K562 (cell line): ENCODE measurements at regions of chr11 and their contacts with region 1.

Region 1: DNA sequence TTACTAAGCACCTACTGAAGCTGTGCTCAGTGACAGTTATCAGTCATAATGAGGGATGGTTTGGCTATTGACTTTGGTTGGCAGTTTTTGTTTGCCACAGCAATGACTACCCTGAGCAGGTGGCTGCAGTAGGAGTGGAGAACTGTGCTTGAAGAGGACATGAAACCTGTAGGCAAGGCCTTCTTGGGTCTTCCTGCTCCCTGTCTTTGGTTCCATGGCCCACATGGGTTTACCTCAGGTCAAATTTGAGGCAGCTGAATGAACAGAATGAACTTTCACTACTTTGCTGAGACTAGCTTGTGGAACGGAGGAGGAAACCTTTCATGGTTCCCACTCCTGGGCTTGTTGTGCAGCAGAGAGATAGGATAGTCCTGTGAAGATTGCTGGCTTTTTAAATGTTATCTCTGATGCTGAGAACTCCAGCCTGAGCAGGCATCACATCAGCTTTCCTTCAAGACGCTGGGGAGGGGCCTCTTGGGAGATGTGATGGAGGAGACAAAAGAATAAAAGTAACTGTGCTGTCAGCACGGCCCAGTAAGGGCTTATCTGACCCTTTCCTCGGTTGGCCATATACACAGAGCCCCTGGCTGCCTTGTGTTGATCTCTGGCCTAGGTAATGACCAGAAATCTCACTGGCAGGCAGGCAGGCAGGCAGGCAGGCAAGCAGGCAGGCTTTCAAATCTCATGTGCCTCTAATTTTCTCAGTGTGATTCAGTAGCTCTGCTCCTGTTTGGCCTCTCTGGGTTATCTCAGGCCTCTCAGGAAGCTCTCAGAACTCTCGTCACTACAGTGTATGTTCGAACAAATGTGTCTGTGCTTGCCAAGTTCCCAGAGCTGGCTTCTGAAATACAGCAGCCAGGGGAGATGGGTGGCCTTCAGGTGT is 12.0 kb downstream of the STIM1 start:
- DNase-seq: peak; percentile 56 to 94 (median 68)
- ATAC-seq: peak; percentile 74
- H3K4me3 ChIP-seq: no peak overlapping the region
- H3K27ac ChIP-seq: peak overlapping the region; percentile 77
- H3K4me1 ChIP-seq: peaks cover 44 to 74% of the 10 kb centered on the region in 2 experiments
- H3K27me3 ChIP-seq: no peaks in the 10 kb centered on the region
- CTCF ChIP-seq: no peak
- EP300 ChIP-seq: peak; percentile 80
- POLR2A ChIP-seq: no peak
- RAD21 ChIP-seq: peak in 1 of 2 experiments; percentile 21; a peak in 2 of 4 replicates

Region 2: DNA sequence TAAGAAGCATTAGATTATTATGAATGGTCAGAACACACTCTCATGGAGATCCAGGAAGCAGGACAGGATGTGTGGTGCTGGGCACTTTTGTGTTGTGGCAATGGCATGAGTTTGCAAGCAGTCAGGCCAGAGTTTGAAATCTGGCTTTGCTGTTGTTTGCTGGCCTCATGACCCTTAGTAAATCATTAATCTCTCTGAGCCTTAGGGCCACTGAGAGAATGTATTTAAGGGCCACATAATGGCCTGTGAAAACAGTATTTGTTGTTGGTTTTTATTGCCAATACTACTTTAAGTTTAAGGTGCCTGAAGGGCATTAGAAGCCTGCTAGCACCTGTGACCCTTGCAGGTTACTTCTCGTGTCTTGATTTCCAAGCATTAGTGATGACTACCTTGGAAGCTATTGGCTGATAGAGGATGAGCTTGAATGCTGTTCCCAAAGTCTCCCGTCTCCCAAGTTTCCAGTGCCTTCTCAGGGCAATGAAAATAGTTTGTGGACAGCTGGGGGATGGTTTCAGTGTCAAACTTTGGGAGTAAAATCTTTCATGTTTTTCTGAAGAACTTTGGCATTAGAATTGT is 12.6 kb after region 1 on chr11:
- CTCF ChIA-PET with region 1: no interaction called
- POLR2A ChIA-PET with region 1: interaction called, 34 read pairs
- in situ Hi-C with region 1: no loop called
- intact Hi-C with region 1: loop called (anchors 2 kb)
- DNase-seq: no peak
- ATAC-seq: no peak
- H3K4me3 ChIP-seq: no peak overlapping the region
- H3K27ac ChIP-seq: no peak overlapping the region; the same call in 2 of the 3 replicates
- H3K4me1 ChIP-seq: peaks cover 13 to 55% of the 10 kb centered on the region in 2 experiments
- H3K27me3 ChIP-seq: no peaks in the 10 kb centered on the region
- CTCF ChIP-seq: no peak
- EP300 ChIP-seq: no peak
- POLR2A ChIP-seq: no peak
- RAD21 ChIP-seq: no peak

Region 3: DNA sequence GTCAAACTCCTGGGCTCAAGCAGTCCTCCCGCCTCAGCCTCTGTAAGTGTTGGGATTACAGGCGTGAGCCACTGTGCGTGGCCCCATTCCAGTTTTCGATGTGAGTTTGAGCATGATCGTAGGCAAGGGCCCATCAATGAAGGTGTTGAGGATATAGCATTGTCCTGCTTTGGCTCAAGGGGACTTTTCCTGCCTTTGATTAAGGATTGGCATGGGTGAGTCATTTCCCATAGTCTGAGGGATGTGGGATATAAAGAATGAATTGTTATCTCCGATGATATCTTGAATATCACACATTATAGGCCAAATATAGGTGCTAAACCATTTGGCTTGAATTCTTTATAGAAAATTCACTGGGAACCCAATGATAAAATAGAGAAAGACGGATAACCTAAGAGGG is 18.4 kb after region 1 on chr11:
- CTCF ChIA-PET with region 1: no interaction called
- POLR2A ChIA-PET with region 1: interaction called, 6 read pairs
- in situ Hi-C with region 1: no loop called
- intact Hi-C with region 1: loop called (anchors 2 kb)
- DNase-seq: no peak
- ATAC-seq: no peak
- H3K4me3 ChIP-seq: no peak overlapping the region
- H3K27ac ChIP-seq: no peak overlapping the region
- H3K4me1 ChIP-seq: peaks cover 0 to 13% of the 10 kb centered on the region in 2 experiments; a peak in 4 of 5 replicates
- H3K27me3 ChIP-seq: no peaks in the 10 kb centered on the region
- CTCF ChIP-seq: no peak
- EP300 ChIP-seq: no peak
- POLR2A ChIP-seq: no peak
- RAD21 ChIP-seq: no peak

Region 4: DNA sequence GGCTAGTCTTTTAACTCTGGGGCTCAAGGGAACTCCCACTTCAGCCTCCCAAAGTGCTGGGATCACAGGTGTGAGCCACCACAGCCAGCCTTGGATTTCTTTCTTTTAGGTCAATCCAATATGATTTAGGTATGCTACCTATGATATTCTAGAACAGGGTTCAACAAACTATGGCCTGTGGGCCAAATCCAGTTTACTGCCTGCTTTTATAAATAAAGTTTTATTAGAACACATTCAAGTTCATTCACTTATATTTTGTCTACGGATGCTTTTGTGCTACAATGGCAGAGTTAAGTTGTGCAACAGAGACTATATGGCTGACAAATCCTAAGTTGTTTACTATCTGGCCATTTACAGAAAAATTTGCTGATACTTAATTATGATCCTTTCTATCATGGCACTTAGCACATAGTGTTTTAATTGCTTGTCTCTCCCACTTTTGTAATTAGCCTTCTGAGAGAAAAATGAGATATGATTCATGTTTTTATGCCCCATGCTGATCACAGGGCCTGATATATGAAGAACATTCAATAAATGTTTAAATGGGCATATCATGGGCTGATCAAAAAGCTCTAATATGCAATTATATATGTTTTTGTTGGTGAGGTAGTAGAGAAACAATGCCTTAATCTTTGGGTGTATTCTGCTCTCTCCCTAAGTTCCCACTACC is 97.6 kb after region 1 on chr11:
- CTCF ChIA-PET with region 1: no interaction called
- POLR2A ChIA-PET with region 1: no interaction called
- in situ Hi-C with region 1: no loop called
- intact Hi-C with region 1: no loop called
- DNase-seq: no peak
- ATAC-seq: no peak; the same call in 2 of the 3 replicates
- H3K4me3 ChIP-seq: no peak overlapping the region
- H3K27ac ChIP-seq: 0 out of 3 replicates have a peak overlapping the region, but pooled peaks have one; percentile 1
- H3K4me1 ChIP-seq: peaks cover 10 to 27% of the 10 kb centered on the region in 2 experiments; a peak in 2 of 5 replicates
- H3K27me3 ChIP-seq: no peaks in the 10 kb centered on the region
- CTCF ChIP-seq: no peak
- EP300 ChIP-seq: no peak
- POLR2A ChIP-seq: no peak
- RAD21 ChIP-seq: no peak